ENCODE measurements at regions of chr22 and their contacts with region 1.

Region 1: GRCh38 chr22:29031227-29032011 is 30.2 kb downstream of the C22orf31 start:
- DNase-seq: peak; percentile 64 to 91
- ATAC-seq: peak; percentile 87 to 90
- H3K4me3 ChIP-seq: peak overlapping the region; percentile 41
- H3K27ac ChIP-seq: peak overlapping the region; percentile 97 to 100
- H3K4me1 ChIP-seq: peaks cover 63% of the 10 kb centered on the region
- CTCF ChIP-seq: no peak
- EP300 ChIP-seq: peak in 1 of 2 experiments; percentile 71; a peak in 2 of 5 replicates
- POLR2A ChIP-seq: no peak
- RAD21 ChIP-seq: peak in 1 of 2 experiments; percentile 12; a peak in 1 of 5 replicates

Region 2: GRCh38 chr22:28882878-28883656 is 148.4 kb before region 1 on chr22 and contains the start of gene ZNRF3:
- CTCF ChIA-PET with region 1: interaction called, 8 read pairs
- POLR2A ChIA-PET with region 1: interaction called, 10 read pairs
- DNase-seq: peak; percentile 65 to 90
- ATAC-seq: peak; percentile 80 to 90
- H3K4me3 ChIP-seq: peak within 1 kb of the TSS; percentile 98
- H3K27ac ChIP-seq: peak within 1 kb of the TSS; percentile 91 to 97
- H3K4me1 ChIP-seq: peaks cover 43% of the 10 kb centered on the region
- CTCF ChIP-seq: no peak
- EP300 ChIP-seq: no peak
- POLR2A ChIP-seq: peak; percentile 59
- RAD21 ChIP-seq: no peak
- polyA plus RNA-seq, gene ZNRF3: 4.6 and 5.5 TPM in 2 replicates

Region 3: GRCh38 chr22:29062286-29062821 is 30.9 kb after region 1 on chr22:
- CTCF ChIA-PET with region 1: no interaction called
- POLR2A ChIA-PET with region 1: no interaction called
- DNase-seq: no peak
- ATAC-seq: no peak
- H3K4me3 ChIP-seq: no peak overlapping the region
- H3K27ac ChIP-seq: no peak overlapping the region
- H3K4me1 ChIP-seq: no peaks in the 10 kb centered on the region
- CTCF ChIP-seq: no peak
- EP300 ChIP-seq: no peak
- POLR2A ChIP-seq: no peak
- RAD21 ChIP-seq: no peak